AG04450 (cell line): ENCODE measurements at regions of chr15 and their contacts with region 1.

Region 1: GRCh38 chr15:57732526-57733331 is 26.2 kb downstream of the POLR2M start:
- DNase-seq: peak; percentile 20
- H3K4me3 ChIP-seq: no peak overlapping the region
- H3K27ac ChIP-seq: no peak overlapping the region
- H3K27me3 ChIP-seq: no peaks in the 10 kb centered on the region
- CTCF ChIP-seq: peak; percentile 88

Region 2: DNA sequence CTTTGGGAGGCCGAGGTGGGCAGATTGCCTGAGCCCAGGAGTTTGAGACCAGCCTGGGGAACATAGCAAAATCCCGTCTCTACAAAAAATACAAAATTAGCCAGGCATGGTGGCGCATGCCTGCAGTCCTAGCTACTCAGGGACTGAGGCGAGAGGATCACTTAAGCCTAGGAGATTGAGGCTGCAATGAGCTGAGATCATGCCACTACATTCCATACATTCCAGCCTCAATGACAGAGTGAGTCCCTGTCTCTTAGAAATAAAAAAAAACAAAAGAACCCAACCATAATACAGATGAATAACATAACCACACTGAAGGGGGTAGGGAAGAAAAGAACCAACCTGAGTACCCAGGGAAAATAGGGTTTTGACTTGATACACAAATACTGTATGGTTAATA is 376.1 kb before region 1 on chr15:
- CTCF ChIA-PET with region 1: no interaction called
- POLR2A ChIA-PET with region 1: no interaction called
- DNase-seq: no peak
- H3K4me3 ChIP-seq: no peak overlapping the region
- H3K27ac ChIP-seq: no peak overlapping the region
- H3K27me3 ChIP-seq: peaks cover 3% of the 10 kb centered on the region
- CTCF ChIP-seq: no peak

Region 3: GRCh38 chr15:57706405-57707209 is 26.1 kb before region 1 on chr15 and contains the start of gene POLR2M:
- CTCF ChIA-PET with region 1: interaction called, 34 read pairs
- POLR2A ChIA-PET with region 1: no interaction called
- DNase-seq: peak; percentile 98
- H3K4me3 ChIP-seq: peak within 1 kb of the TSS; percentile 97
- H3K27ac ChIP-seq: peak within 1 kb of the TSS; percentile 89
- H3K27me3 ChIP-seq: peaks cover 3% of the 10 kb centered on the region
- CTCF ChIP-seq: no peak
- polyA plus RNA-seq, gene POLR2M: 67.3 and 72.6 TPM in 2 replicates

Region 4: GRCh38 chr15:57720867-57721266 is 11.9 kb before region 1 on chr15:
- CTCF ChIA-PET with region 1: interaction called, 72 read pairs
- POLR2A ChIA-PET with region 1: no interaction called
- DNase-seq: no peak
- H3K4me3 ChIP-seq: no peak overlapping the region
- H3K27ac ChIP-seq: no peak overlapping the region
- H3K27me3 ChIP-seq: no peaks in the 10 kb centered on the region
- CTCF ChIP-seq: no peak

Region 5: DNA sequence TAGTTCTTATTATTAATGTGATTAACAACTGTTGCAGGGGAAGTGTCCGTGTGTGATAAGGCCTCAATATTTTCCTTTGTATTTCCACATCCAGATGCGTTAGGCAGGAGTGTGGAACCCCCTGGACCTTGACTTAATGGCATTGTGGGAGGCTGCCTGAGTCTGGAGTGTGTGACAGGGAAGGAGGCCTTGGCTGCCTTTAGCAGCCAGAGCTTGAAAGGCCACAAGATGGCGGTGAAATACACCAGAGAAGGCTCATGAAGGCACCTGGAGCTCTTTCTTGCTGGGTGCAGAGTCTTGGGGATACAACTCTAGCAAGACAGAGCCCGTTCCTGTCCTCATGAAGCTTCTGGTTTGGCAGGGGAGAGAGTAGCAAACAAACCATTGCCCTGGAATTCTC is 10.7 kb after region 1 on chr15:
- CTCF ChIA-PET with region 1: interaction called, 27 read pairs
- POLR2A ChIA-PET with region 1: no interaction called
- DNase-seq: no peak
- H3K4me3 ChIP-seq: no peak overlapping the region
- H3K27ac ChIP-seq: no peak overlapping the region
- H3K27me3 ChIP-seq: peaks cover 7% of the 10 kb centered on the region
- CTCF ChIP-seq: no peak

Region 6: DNA sequence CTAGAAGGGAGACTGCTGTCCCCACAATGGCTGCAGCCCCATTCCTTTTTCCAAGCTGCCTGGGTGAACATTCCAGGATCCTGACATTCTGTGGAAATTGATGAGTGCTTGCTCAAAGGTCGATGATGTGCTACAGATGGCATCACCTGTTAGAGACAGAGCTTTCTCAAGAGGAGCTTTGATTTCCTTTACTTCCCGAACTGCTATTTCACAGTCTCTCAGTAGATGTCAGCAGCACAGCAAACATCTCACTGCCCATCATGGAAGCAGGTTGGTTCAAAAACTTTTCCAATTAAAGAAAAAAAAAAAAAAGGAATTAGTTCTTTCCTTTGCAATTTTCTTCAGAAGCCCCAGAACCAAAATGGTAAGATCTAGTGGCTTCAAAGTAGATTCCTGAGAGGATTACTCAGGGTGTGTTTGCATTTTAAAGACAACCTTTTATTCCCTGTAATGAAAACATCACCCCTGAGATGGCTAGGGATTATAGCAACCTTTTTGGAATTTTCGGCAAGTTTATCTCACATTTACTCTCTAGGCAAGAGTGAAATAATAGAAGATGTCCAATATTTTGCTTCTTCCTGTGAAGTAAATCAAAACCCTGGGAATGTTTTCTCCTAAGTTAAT is 18.6 kb after region 1 on chr15:
- CTCF ChIA-PET with region 1: interaction called, 22 read pairs
- POLR2A ChIA-PET with region 1: no interaction called
- DNase-seq: peak; percentile 13
- H3K4me3 ChIP-seq: no peak overlapping the region
- H3K27ac ChIP-seq: no peak overlapping the region
- H3K27me3 ChIP-seq: peaks cover 11% of the 10 kb centered on the region
- CTCF ChIP-seq: peak; percentile 65

Region 7: GRCh38 chr15:57820119-57820518 is 87.4 kb after region 1 on chr15:
- CTCF ChIA-PET with region 1: no interaction called
- POLR2A ChIA-PET with region 1: no interaction called
- DNase-seq: no peak
- H3K4me3 ChIP-seq: no peak overlapping the region
- H3K27ac ChIP-seq: no peak overlapping the region
- H3K27me3 ChIP-seq: no peaks in the 10 kb centered on the region
- CTCF ChIP-seq: no peak

Region 8: GRCh38 chr15:57872281-57873030 is 139.7 kb after region 1 on chr15:
- CTCF ChIA-PET with region 1: interaction called, 10 read pairs
- POLR2A ChIA-PET with region 1: no interaction called
- DNase-seq: no peak
- H3K4me3 ChIP-seq: no peak overlapping the region
- H3K27ac ChIP-seq: no peak overlapping the region
- H3K27me3 ChIP-seq: no peaks in the 10 kb centered on the region
- CTCF ChIP-seq: no peak